ENCODE measurements at regions of chr9 and their contacts with region 1.

Region 1: DNA sequence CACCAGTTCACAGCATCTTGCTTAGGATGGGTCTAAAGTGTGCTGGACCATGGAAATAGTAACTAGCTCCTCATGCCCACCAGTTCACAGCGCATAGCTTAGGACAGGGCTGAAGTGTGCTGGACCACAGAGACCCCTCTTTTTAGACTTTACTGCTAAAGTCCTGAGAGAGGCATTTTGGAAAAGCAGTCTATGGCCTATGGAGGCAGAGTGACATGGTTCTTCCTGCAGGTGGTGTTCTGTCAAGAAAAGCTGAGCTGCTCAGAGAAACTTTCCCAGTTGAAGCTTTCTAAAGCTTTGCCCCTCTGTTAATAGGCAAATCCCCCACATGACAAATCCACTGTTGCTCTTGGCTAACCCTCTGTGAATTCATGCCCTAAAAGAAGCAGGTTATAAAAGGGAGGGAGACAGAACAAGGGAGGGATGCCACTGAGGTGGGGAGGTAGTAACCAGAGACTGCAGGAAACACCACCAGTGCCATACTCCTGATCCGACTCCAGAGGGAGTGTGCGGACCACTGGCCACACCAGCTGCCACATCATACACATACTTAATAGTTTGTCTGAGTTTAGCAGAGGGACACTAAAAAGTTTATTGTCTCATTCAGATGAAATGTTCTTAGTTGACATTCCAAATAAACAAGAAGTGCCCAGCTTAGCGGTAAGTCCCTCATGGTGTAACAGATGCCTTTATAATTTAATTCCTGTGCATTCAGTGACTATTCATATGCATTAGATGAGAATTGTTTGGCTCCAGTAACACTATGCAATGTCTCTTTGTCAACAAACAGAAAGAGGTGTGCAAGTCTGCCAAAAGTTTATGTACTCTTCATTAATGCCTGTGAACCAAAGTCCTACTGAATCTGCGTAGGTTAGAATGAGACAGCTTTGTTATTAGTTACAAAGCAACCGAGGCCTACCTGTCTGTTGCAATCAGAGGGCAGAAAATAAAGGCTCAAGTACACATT is 236.2 kb upstream of the NFIL3 start:
- DNase-seq: no peak
- ATAC-seq: no peak
- H3K4me3 ChIP-seq: no peak overlapping the region
- H3K27ac ChIP-seq: no peak overlapping the region
- H3K4me1 ChIP-seq: no peaks in the 10 kb centered on the region
- H3K27me3 ChIP-seq: no peaks in the 10 kb centered on the region
- CTCF ChIP-seq: no peak
- POLR2A ChIP-seq: no peak

Region 2: DNA sequence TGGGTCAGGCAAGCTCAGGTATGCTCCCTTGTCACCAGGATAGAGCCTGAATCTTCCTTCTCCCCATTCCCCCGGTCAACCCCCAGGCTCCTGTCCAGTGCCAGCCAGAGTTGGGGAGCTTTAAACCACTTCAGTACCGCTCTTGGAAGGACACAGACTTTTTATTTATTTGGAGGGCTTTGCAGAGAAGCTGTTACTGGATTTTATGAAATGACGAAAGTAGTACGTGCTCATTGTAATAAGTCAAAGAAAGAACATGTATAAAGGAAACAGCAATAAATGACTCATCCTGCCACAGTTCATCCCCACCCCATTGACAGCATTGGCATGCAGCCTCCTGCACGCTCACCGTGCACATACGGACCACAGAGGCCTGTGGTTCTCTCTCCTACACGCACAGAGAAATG is 528.4 kb before region 1 on chr9:
- in situ Hi-C with region 1: no loop called
- intact Hi-C with region 1: loop called (anchors 10 kb)
- DNase-seq: no peak
- ATAC-seq: peak; percentile 33 to 42
- H3K4me3 ChIP-seq: no peak overlapping the region
- H3K27ac ChIP-seq: no peak overlapping the region
- H3K4me1 ChIP-seq: no peaks in the 10 kb centered on the region
- H3K27me3 ChIP-seq: no peaks in the 10 kb centered on the region
- CTCF ChIP-seq: no peak
- POLR2A ChIP-seq: no peak